SK-N-SH (cell line): ENCODE measurements at regions of chr13 and their contacts with region 1.

Region 1: GRCh38 chr13:90855513-90855912 is 492.0 kb upstream of the MIR17HG start:
- DNase-seq: no peak
- H3K4me3 ChIP-seq: no peak overlapping the region
- H3K27ac ChIP-seq: no peak overlapping the region
- H3K4me1 ChIP-seq: no peaks in the 10 kb centered on the region
- H3K27me3 ChIP-seq: no peaks in the 10 kb centered on the region
- CTCF ChIP-seq: no peak
- EP300 ChIP-seq: no peak
- RAD21 ChIP-seq: no peak

Region 2: GRCh38 chr13:90839061-90839460 is 16.5 kb before region 1 on chr13:
- CTCF ChIA-PET with region 1: no interaction called
- POLR2A ChIA-PET with region 1: no interaction called
- DNase-seq: no peak
- H3K4me3 ChIP-seq: no peak overlapping the region
- H3K27ac ChIP-seq: no peak overlapping the region
- H3K4me1 ChIP-seq: no peaks in the 10 kb centered on the region
- H3K27me3 ChIP-seq: no peaks in the 10 kb centered on the region
- CTCF ChIP-seq: no peak
- EP300 ChIP-seq: no peak
- RAD21 ChIP-seq: no peak

Region 3: DNA sequence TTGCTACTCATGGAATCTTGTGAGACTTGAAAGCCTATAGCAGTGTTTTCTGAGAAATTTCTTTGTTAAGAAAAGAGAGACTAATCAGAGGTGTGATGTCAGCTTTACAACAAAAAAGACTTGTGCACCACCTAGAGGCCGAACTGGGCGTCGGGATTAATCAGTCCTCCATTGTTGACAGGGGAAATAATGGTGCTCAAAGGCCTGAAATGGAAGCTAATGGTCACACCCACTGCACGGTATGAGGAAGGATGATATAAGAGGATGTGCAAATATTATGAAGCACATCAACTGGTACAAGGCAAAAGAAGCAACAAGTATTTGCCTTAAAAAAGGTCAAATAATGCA is 11.8 kb after region 1 on chr13:
- CTCF ChIA-PET with region 1: interaction called, 29 read pairs
- POLR2A ChIA-PET with region 1: no interaction called
- DNase-seq: peak; percentile 37
- H3K4me3 ChIP-seq: peak overlapping the region in 1 of 2 experiments; percentile 42; a peak in 1 of 4 replicates
- H3K27ac ChIP-seq: no peak overlapping the region
- H3K4me1 ChIP-seq: no peaks in the 10 kb centered on the region
- H3K27me3 ChIP-seq: no peaks in the 10 kb centered on the region
- CTCF ChIP-seq: peak; percentile 84
- EP300 ChIP-seq: no peak
- RAD21 ChIP-seq: peak; percentile 92